ENCODE measurements at regions of chr6 and their contacts with region 1.

Region 1: GRCh38 chr6:27146706-27147505 is 100.6 kb upstream of the PRSS16 start:
- DNase-seq: peak; percentile 37 to 94 (median 82)
- ATAC-seq: peak; percentile 85 to 88
- H3K4me3 Mint-ChIP-seq: no peak overlapping the region
- H3K27ac Mint-ChIP-seq: no peak overlapping the region
- H3K4me1 Mint-ChIP-seq: peaks cover 3 to 25% (median 12%) of the 10 kb centered on the region in 4 donors
- H3K27me3 Mint-ChIP-seq: no peaks in the 10 kb centered on the region

Region 2: DNA sequence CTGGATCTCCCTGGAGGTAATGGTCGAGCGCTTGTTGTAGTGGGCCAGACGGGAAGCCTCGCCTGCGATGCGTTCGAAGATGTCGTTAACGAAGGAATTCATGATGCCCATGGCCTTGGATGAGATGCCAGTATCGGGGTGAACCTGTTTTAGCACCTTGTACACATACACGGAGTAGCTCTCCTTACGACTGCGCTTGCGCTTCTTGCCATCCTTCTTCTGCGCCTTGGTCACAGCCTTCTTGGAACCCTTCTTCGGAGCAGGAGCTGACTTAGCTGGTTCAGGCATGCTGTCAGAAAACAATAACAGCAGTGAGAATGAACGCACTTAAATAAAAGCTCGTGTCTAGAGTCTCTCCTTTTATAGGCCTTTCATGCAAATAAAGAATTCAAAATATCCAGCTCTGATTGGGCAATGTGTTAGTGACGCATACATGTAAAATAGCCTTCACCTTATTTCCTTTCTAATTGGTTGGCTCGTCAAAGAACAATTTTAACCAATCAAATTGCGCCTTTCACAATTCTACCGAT is 930.5 kb before region 1 on chr6:
- POLR2A ChIA-PET with region 1: interaction called, 16 read pairs
- DNase-seq: peak; percentile 34 to 95 (median 86)
- ATAC-seq: peak; percentile 81 to 84
- H3K4me3 Mint-ChIP-seq: no peak overlapping the region
- H3K27ac Mint-ChIP-seq: no peak overlapping the region
- H3K4me1 Mint-ChIP-seq: peaks cover 0 to 12% (median 7%) of the 10 kb centered on the region in 4 donors
- H3K27me3 Mint-ChIP-seq: no peaks in the 10 kb centered on the region

Region 3: GRCh38 chr6:27132532-27133280 is 14.2 kb before region 1 on chr6:
- POLR2A ChIA-PET with region 1: interaction called, 311 read pairs
- DNase-seq: peak; percentile 69 to 98 (median 94)
- ATAC-seq: peak; percentile 84
- H3K4me3 Mint-ChIP-seq: no peak overlapping the region
- H3K27ac Mint-ChIP-seq: no peak overlapping the region
- H3K4me1 Mint-ChIP-seq: peaks cover 5 to 20% (median 10%) of the 10 kb centered on the region in 4 donors
- H3K27me3 Mint-ChIP-seq: no peaks in the 10 kb centered on the region

Region 4: GRCh38 chr6:27177485-27178406 is 30.8 kb after region 1 on chr6:
- POLR2A ChIA-PET with region 1: interaction called, 23 read pairs
- DNase-seq: peak; percentile 52 to 83 (median 66)
- ATAC-seq: peak; percentile 76 to 82
- H3K4me3 Mint-ChIP-seq: peak overlapping the region; percentile 90 to 98 (median 97)
- H3K27ac Mint-ChIP-seq: peak overlapping the region; percentile 86 to 99 (median 92)
- H3K4me1 Mint-ChIP-seq: peaks cover 3 to 23% (median 16%) of the 10 kb centered on the region in 4 donors
- H3K27me3 Mint-ChIP-seq: peaks cover 0 to 7% (median 2%) of the 10 kb centered on the region in 5 donors

Region 5: DNA sequence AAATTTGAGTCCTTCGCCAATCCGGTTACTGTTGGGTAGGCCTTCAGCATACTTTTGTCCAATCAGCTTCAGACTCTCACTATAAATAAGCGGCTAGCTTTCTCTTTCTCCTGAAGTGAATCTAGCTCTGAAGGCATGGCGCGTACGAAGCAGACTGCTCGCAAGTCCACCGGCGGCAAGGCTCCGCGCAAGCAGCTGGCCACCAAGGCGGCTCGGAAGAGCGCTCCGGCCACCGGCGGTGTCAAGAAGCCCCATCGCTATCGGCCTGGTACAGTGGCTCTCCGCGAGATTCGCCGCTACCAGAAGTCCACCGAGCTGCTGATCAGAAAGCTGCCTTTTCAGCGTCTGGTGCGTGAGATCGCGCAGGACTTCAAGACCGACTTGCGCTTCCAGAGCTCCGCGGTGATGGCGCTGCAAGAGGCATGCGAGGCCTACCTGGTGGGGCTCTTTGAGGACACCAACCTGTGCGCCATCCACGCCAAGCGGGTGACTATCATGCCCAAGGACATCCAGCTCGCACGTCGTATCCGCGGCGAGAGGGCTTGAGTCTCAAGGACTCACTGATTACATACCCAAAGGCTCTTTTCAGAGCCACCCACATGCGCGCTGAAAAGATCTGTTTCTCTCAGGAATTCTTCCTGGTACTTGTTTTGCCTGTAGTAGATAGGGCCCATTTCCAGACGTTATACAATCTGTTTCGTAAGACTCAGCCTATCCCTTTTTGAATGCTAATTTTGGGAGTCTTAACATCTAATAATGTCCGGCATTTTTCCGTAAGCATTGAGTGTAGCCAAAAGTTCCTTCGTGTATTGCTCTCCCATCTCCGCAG is 663.2 kb after region 1 on chr6:
- POLR2A ChIA-PET with region 1: interaction called, 68 read pairs
- DNase-seq: peak; percentile 58 to 95 (median 84)
- ATAC-seq: peak; percentile 63 to 65
- H3K4me3 Mint-ChIP-seq: peak overlapping the region; percentile 90 to 97 (median 96)
- H3K27ac Mint-ChIP-seq: peak overlapping the region; percentile 97 to 99 (median 98)
- H3K4me1 Mint-ChIP-seq: peaks cover 32 to 72% (median 47%) of the 10 kb centered on the region in 4 donors
- H3K27me3 Mint-ChIP-seq: no peaks in the 10 kb centered on the region

Region 6: DNA sequence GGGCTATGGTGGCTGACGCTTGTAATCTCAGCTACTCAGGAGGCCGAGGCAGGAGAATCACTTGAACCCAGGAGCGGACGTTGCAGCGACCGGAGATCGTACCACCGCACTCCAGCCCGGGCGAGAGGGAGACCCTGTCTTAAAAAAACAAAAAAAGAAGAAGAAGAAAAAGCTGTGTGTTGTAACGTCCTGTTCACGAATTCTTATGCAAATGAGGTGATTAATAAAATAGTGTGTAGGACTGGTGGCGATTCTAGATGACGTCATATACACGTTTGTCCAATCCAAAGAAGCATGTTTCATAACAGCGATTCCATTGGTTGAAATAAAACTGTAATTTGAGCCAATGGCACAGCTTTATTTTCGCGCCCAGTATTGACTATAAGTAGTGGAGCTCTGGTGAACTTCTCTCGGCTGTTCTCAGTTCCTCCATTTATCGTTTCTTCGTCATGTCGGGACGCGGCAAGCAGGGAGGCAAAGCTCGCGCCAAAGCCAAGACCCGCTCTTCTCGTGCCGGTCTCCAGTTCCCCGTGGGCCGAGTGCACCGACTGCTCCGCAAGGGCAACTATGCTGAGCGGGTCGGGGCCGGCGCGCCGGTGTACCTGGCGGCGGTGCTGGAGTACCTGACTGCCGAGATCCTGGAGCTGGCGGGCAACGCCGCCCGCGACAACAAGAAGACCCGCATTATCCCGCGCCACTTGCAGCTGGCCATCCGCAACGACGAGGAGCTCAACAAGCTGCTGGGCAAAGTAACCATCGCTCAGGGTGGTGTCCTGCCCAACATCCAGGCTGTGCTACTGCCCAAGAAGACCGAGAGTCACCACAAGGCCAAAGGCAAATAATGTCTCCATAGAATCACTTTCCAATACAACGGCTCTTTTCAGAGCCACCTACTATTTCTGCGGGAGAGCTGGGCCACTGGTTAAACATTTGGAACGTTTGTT is 718.3 kb after region 1 on chr6:
- POLR2A ChIA-PET with region 1: interaction called, 17 read pairs
- DNase-seq: peak; percentile 43 to 91 (median 80)
- ATAC-seq: peak; percentile 81
- H3K4me3 Mint-ChIP-seq: peak overlapping the region; percentile 87 to 99 (median 98)
- H3K27ac Mint-ChIP-seq: peak overlapping the region; percentile 87 to 99 (median 96)
- H3K4me1 Mint-ChIP-seq: peaks cover 15 to 45% (median 39%) of the 10 kb centered on the region in 4 donors
- H3K27me3 Mint-ChIP-seq: no peaks in the 10 kb centered on the region

Measured in naive thymus-derived CD8-positive, alpha-beta T cell (primary cell).